Activated naive CD4-positive, alpha-beta T cell treated with anti-CD3 and anti-CD28 coated beads for 36 hours (primary cell): ENCODE measurements at regions of chr9 and their contacts with region 1.

Region 1: GRCh38 chr9:32644698-32645097 is 9.2 kb upstream of the TAF1L start:
- DNase-seq: no peak
- H3K4me3 Mint-ChIP-seq: no peak overlapping the region
- H3K27ac Mint-ChIP-seq: no peak overlapping the region
- H3K4me1 Mint-ChIP-seq: no peaks in the 10 kb centered on the region
- H3K27me3 Mint-ChIP-seq: peaks cover 18% of the 10 kb centered on the region

Region 2: DNA sequence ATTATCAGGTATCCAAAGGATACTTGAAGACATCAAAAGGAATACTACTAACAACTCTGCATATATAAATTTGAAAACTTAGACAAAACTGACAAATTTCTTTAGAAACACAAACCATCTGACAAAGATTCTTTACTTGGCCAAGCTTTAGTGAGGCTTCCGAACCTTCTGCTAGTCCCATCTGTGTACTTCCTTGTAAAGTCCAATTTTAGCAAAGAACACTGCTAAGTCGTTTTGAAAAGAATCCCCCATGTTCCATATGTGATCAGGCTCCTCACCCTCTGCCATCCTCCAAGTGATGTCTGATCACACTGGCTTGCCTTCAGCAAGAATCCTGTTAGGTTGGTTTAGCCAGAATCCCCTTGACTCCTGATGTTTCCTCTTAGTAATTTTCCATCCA is 410.2 kb before region 1 on chr9:
- CTCF ChIA-PET with region 1: no interaction called
- intact Hi-C with region 1: no loop called
- DNase-seq: no peak
- H3K4me3 Mint-ChIP-seq: no peak overlapping the region
- H3K27ac Mint-ChIP-seq: no peak overlapping the region
- H3K4me1 Mint-ChIP-seq: no peaks in the 10 kb centered on the region
- H3K27me3 Mint-ChIP-seq: peaks cover 5% of the 10 kb centered on the region

Region 3: DNA sequence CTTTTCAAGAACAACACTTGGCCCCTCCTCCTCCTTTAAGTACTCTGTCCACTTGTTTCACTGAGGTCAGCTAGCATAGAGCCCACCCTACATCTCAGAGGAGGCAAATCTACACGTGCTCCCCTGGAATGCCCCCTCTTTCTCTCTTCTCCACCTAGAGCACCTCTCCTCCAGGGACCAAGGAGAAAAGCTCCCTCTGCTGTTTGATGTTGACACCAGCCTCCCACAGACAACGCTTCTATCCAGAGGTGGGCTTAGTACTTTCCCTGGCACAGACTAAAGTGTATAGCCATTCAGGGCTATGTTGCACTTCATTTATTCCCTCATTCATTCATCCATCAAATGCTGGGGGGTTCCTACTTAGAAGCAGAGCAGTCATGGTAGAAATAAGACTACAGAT is 58.9 kb after region 1 on chr9:
- CTCF ChIA-PET with region 1: no interaction called
- intact Hi-C with region 1: loop called (anchors 10 kb)
- DNase-seq: no peak
- H3K4me3 Mint-ChIP-seq: no peak overlapping the region
- H3K27ac Mint-ChIP-seq: no peak overlapping the region
- H3K4me1 Mint-ChIP-seq: no peaks in the 10 kb centered on the region
- H3K27me3 Mint-ChIP-seq: no peaks in the 10 kb centered on the region